ENCODE measurements at regions of chr20 and their contacts with region 1.

Region 1: DNA sequence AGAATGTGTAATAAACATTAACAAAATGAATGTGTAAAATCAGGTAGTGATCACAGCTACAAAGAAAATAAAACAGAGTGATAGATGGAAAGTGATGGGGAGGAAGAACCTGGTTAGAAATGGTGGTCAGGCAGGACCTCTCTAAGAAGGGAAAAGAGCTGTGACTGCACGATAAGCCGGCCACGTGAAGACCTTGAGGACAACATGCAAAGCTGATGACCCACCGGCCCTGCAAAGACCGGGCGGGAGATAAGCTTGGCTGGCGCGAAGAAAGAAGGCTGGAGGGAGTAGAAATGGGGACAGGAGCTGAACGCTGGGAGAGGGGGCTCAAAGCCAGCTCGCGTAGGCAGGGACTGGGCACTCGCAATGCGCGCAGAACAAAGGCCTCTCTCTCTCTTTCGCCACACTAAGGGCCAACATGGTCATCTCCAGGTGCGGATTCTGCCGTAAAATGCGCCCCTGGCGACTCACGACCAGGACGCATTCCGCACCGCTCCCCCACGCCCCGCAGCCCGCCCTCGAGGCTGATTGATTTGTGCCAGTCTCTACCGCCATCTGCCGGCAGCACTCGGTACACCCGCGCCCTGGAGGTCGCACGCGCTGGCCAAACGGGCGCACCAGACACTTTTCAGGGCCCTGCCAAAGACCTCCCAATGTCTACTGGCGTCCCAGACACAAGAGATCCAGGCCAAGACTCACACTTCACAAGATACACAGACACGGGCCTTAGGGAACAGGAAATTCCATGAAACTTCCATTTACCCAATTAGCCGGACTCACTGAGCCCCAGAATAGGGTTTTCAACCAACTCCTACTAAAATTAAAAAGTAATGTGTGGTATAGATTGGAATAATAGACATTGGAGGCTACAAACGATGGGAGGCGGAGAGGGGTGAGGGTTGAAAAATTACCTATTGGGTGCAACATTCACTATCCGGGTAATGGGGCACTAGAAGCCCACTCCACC is 9.4 kb downstream of the DEFB132 start:
- DNase-seq: peak; percentile 85 to 91 (median 89)
- H3K4me3 ChIP-seq: peak overlapping the region; percentile 51 to 89 (median 66)
- H3K27ac ChIP-seq: no peak overlapping the region
- H3K4me1 ChIP-seq: peaks cover 0 to 7% (median 5%) of the 10 kb centered on the region in 4 experiments
- H3K27me3 ChIP-seq: no peaks in the 10 kb centered on the region

Region 2: DNA sequence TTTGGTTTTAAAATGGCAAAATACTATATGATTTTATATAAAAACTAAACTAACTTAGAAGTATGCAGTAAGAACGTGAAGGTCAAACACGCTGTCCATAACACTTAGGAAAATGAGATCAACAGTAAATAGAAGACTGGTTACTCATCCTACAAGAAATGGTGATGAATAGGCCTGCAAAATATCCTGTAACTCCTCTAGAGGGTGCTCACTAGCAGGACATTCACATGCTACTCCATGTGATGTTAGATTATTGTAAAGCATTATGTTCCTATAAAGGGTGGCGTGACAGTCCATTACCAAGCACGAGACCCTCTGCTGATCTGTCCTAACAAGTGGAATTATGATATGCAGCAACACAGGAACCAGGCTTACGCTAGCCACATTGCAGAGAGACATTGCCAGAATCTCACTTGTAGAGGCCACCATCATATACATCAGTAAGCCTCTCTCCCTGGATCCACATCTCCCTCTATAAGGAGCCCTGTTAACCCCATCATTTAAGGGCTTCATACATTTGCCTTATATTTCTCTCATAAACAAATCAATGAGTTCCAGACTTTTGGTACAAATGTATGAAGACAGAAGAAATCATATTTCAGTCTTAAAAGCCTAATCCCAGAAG is 57.8 kb before region 1 on chr20:
- CTCF ChIA-PET with region 1: interaction called, 35 read pairs
- POLR2A ChIA-PET with region 1: no interaction called
- DNase-seq: peak; percentile 59 to 77 (median 73)
- H3K4me3 ChIP-seq: no peak overlapping the region
- H3K27ac ChIP-seq: no peak overlapping the region
- H3K4me1 ChIP-seq: no peaks in the 10 kb centered on the region
- H3K27me3 ChIP-seq: peaks cover 0 to 5% (median 0%) of the 10 kb centered on the region in 5 experiments

Region 3: DNA sequence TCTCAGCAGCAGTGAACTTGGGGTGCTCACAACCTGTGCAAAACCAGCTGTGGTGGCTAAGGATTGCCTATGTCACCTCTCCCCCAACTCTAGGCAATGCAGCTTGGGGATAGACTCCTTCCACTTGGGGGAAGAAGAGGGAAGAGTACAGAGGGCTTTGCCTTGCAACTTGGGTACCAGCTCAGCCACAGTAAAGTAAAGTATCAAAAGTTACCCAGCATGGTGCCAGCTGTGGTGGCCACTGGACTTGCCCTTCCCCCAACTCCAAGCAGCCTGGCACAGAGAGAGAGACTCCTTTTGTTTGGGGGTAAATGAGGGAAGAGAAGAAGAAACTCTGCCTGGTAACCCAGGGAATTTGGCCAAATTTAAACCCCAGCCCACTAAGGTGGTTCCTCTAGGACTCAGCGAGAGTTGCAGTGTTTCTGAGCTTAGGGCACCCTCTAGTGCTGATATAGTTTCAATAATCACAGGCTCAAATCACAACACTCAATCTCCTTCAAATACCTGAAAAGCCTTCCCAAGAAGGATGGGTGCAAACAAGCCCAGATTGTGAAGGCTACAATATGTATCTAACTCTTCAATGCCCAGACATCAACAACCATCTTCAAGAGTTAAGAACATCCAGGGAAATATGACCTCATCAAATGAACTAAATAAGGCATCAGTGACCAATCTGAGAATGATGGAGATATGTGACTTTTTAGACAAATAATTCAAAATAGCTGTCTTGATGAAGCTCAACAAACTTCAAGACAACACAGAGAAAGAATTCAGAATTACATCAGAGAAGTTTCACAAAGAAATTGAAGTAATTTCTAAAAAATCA is 47.4 kb before region 1 on chr20:
- CTCF ChIA-PET with region 1: interaction called, 28 read pairs
- POLR2A ChIA-PET with region 1: no interaction called
- DNase-seq: peak; percentile 42 to 71 (median 63)
- H3K4me3 ChIP-seq: no peak overlapping the region
- H3K27ac ChIP-seq: no peak overlapping the region
- H3K4me1 ChIP-seq: no peaks in the 10 kb centered on the region
- H3K27me3 ChIP-seq: no peaks in the 10 kb centered on the region

Region 4: DNA sequence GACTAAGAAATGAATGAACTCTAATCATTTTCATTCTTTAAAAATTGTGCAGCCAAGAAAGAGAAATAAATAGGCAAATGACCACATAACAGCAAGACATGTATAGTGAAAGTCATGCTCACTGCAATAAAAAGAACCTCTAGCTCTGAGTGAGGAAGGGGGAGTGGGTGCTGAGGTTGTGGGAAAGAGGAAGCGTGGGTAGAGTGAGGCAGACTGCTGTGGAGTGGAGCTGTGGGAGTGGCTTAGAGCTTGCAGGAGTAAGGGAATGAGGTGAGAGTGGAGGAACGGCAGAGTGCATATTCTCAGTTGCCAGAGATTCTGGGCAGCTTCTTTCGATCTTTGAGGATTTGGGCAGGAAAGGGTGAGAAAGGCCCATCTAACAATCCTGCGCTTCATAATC is 29.4 kb before region 1 on chr20:
- CTCF ChIA-PET with region 1: interaction called, 27 read pairs
- POLR2A ChIA-PET with region 1: interaction called, 5 read pairs
- DNase-seq: peak; percentile 67 to 93 (median 88)
- H3K4me3 ChIP-seq: peak overlapping the region in 6 of 7 experiments; percentile 16 to 74 (median 54)
- H3K27ac ChIP-seq: peak overlapping the region; percentile 10 to 50
- H3K4me1 ChIP-seq: peaks cover 6 to 22% (median 16%) of the 10 kb centered on the region in 4 experiments
- H3K27me3 ChIP-seq: no peaks in the 10 kb centered on the region

Region 5: DNA sequence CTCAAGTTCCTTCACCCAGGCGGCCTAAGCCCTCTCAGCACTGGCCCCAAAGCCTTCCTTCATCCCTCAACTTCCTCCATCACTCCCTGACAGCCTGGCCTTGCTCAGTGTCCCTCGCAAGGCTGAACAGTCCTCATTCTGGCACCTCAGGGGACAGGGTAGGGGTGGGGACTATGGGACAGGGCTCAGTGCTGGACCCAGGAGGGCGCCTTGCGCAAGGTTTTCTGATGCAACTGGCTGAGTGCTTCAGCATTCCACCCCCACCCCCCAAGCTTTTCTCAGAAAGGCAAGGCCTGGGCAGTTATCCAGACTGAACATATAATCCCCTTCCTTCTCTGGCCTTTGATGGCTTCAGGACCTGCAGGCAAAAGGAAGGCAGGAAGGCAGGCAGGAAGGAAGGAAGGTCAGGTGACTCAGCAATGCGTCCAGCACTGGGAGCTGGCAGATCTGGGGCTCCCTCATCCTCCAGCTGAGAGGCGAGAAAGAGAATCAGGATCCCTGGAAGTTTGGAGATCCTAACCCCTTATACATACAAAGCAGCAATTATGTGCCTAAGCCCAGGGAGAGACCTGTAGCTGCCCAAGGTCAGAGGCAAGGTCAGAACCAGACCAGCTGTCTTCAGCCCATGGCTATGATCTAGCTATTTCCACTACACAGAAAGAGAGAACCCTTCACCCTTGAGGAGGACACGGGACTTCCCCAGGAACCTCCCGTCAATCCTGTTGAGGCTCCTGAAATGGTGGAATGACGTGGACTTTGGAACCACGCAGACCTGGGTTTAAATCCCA is 105.1 kb after region 1 on chr20:
- CTCF ChIA-PET with region 1: no interaction called
- POLR2A ChIA-PET with region 1: no interaction called
- DNase-seq: peak in 2 of 3 donors; percentile 51 to 52
- H3K4me3 ChIP-seq: peak overlapping the region in 1 of 7 experiments; percentile 37
- H3K27ac ChIP-seq: peak overlapping the region in 1 of 2 experiments; percentile 72
- H3K4me1 ChIP-seq: peaks cover 0 to 31% (median 26%) of the 10 kb centered on the region in 4 experiments
- H3K27me3 ChIP-seq: no peaks in the 10 kb centered on the region

Region 6: DNA sequence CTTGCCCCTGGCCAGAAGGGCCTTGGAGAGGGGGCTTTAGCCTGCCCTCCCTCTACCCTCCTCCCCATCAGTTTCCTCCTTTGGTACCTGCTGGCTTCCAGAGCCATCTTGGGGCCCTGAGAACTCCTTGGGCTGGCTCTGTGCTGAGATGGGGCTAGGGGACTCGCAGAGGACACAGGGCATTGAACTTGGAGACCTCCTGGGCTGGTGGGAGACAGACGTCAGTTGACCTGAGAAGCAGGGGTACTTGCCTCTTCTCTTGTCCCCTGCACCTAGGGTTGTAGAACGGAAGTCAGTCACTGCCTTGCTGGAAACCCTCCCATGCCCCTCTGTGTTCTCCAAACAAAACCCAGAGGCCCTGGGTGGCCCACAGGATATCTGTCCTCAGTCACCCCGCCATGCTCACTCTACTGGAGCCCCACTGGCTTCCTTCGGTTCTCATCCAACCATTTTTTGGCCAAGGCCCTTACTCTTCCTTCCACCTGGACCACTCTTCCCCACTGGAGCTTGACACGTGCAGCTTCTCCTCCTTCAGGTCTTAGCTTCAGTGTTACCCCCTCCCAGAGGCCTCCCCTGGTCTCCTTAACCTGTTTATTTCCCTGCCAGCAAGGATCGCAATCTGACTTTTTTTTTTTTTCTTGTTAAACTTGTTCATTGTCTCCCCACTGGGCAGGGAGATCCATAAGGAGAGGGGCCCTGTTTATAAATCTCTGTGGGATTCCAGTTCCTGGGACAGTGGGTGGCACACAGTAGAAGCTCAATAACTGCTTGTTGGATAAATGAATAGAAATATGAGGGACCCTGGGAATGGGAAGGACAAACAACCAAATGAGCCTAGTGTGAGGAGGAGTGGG is 142.2 kb after region 1 on chr20:
- CTCF ChIA-PET with region 1: no interaction called
- POLR2A ChIA-PET with region 1: no interaction called
- DNase-seq: peak; percentile 2 to 29 (median 17)
- H3K4me3 ChIP-seq: peak overlapping the region; percentile 63 to 99 (median 96)
- H3K27ac ChIP-seq: peak overlapping the region; percentile 74 to 92
- H3K4me1 ChIP-seq: peaks cover 6 to 27% (median 23%) of the 10 kb centered on the region in 4 experiments
- H3K27me3 ChIP-seq: no peaks in the 10 kb centered on the region

Measured in common myeloid progenitor, CD34-positive (primary cell).